Ovary (tissue), 10 donors: ENCODE measurements at regions of chr10 and their contacts with region 1.

Region 1: GRCh38 chr10:104121520-104122224 is at the start of gene SFR1:
- DNase-seq: peak; percentile 98 to 100 (median 99)
- H3K4me3 ChIP-seq: peak within 1 kb of the TSS; percentile 83
- H3K27ac ChIP-seq: peak within 1 kb of the TSS; percentile 87 to 99
- H3K4me1 ChIP-seq: peaks cover 2% of the 10 kb centered on the region
- H3K27me3 ChIP-seq: no peaks in the 10 kb centered on the region
- CTCF ChIP-seq: peak; percentile 71 to 83 (median 79)
- EP300 ChIP-seq: no peak
- POLR2A ChIP-seq: peak; percentile 79
- total RNA-seq, gene SFR1: 6.0 to 12.0 (median 7.9) TPM

Region 2: GRCh38 chr10:103888113-103888841 is 233.4 kb before region 1 on chr10:
- intact Hi-C with region 1: loop called (anchors 5 to 10 kb)
- DNase-seq: peak; percentile 61 to 78 (median 75)
- H3K4me3 ChIP-seq: no peak overlapping the region
- H3K27ac ChIP-seq: peak overlapping the region in 1 of 2 donors; percentile 62
- H3K4me1 ChIP-seq: no peaks in the 10 kb centered on the region
- H3K27me3 ChIP-seq: no peaks in the 10 kb centered on the region
- CTCF ChIP-seq: peak; percentile 26 to 91 (median 91)
- EP300 ChIP-seq: no peak
- POLR2A ChIP-seq: no peak

Region 3: GRCh38 chr10:103966671-103967447 is 154.8 kb before region 1 on chr10 and contains the start of gene SLK:
- intact Hi-C with region 1: loop called in 1 of 4 experiments (anchors 5 kb)
- DNase-seq: peak; percentile 81 to 91 (median 87)
- H3K4me3 ChIP-seq: peak within 1 kb of the TSS; percentile 93
- H3K27ac ChIP-seq: peak within 1 kb of the TSS; percentile 96 to 99
- H3K4me1 ChIP-seq: peaks cover 4% of the 10 kb centered on the region
- H3K27me3 ChIP-seq: no peaks in the 10 kb centered on the region
- CTCF ChIP-seq: no peak
- EP300 ChIP-seq: no peak
- POLR2A ChIP-seq: peak; percentile 96
- total RNA-seq, gene SLK: 38.8 to 71.5 (median 43.8) TPM

Region 4: GRCh38 chr10:104406715-104407650 is 285.3 kb after region 1 on chr10:
- intact Hi-C with region 1: no loop called
- DNase-seq: no peak
- H3K4me3 ChIP-seq: no peak overlapping the region
- H3K27ac ChIP-seq: no peak overlapping the region
- H3K4me1 ChIP-seq: no peaks in the 10 kb centered on the region
- H3K27me3 ChIP-seq: no peaks in the 10 kb centered on the region
- CTCF ChIP-seq: no peak
- EP300 ChIP-seq: no peak
- POLR2A ChIP-seq: no peak